ENCODE measurements at regions of chr20 and their contacts with region 1.

Region 1: GRCh38 chr20:10501402-10501801 is 66.3 kb downstream of the SLX4IP start:
- DNase-seq: peak in 6 of 14 experiments; percentile 5 to 34 (median 26)
- ATAC-seq: peak; percentile 52
- H3K4me3 ChIP-seq: peak overlapping the region; percentile 54
- H3K4me3 Mint-ChIP-seq: peak overlapping the region; percentile 89
- H3K27ac ChIP-seq: peak overlapping the region in 1 of 2 donors; percentile 71
- H3K27ac Mint-ChIP-seq: peak overlapping the region; percentile 93
- H3K4me1 ChIP-seq: peaks cover 19% of the 10 kb centered on the region
- H3K4me1 Mint-ChIP-seq: peaks cover 35% of the 10 kb centered on the region
- H3K27me3 ChIP-seq: no peaks in the 10 kb centered on the region
- H3K27me3 Mint-ChIP-seq: no peaks in the 10 kb centered on the region
- CTCF ChIP-seq: no peak

Region 2: DNA sequence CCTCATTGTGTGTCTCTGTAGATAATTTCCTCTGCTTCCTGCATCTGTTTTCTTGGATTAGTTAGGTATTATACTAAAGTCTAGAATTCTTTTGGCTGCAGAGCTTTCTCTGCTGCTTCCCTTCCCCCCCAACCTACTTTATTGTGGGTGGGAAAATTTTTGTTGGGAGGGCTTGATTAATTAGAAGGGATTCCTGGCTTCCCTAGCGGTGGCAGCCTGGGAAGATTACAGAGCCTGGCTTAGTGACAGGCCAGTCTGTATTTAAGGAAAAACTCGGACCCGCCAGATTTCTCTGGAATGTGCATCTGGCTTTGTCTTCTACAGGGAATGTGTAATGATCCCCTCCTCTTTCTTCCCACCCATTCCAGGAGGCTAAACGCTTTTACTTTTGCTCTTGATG is 35.1 kb before region 1 on chr20:
- CTCF ChIA-PET with region 1: no interaction called
- POLR2A ChIA-PET with region 1: no interaction called
- intact Hi-C with region 1: no loop called
- DNase-seq: no peak
- ATAC-seq: no peak
- H3K4me3 ChIP-seq: no peak overlapping the region
- H3K4me3 Mint-ChIP-seq: no peak overlapping the region
- H3K27ac ChIP-seq: no peak overlapping the region
- H3K27ac Mint-ChIP-seq: no peak overlapping the region
- H3K4me1 ChIP-seq: peaks cover 4% of the 10 kb centered on the region
- H3K4me1 Mint-ChIP-seq: peaks cover 7% of the 10 kb centered on the region
- H3K27me3 ChIP-seq: no peaks in the 10 kb centered on the region
- H3K27me3 Mint-ChIP-seq: no peaks in the 10 kb centered on the region
- CTCF ChIP-seq: no peak

Region 3: GRCh38 chr20:10536531-10536930 is 35.1 kb after region 1 on chr20:
- CTCF ChIA-PET with region 1: no interaction called
- POLR2A ChIA-PET with region 1: no interaction called
- intact Hi-C with region 1: loop called in 1 of 2 experiments (anchors 5 kb)
- DNase-seq: peak in 8 of 14 experiments; percentile 4 to 39 (median 20)
- ATAC-seq: no peak
- H3K4me3 ChIP-seq: no peak overlapping the region
- H3K4me3 Mint-ChIP-seq: no peak overlapping the region
- H3K27ac ChIP-seq: no peak overlapping the region
- H3K27ac Mint-ChIP-seq: no peak overlapping the region
- H3K4me1 ChIP-seq: no peaks in the 10 kb centered on the region
- H3K4me1 Mint-ChIP-seq: peaks cover 24% of the 10 kb centered on the region
- H3K27me3 ChIP-seq: no peaks in the 10 kb centered on the region
- H3K27me3 Mint-ChIP-seq: no peaks in the 10 kb centered on the region
- CTCF ChIP-seq: peak; percentile 24

Measured in CD4-positive, alpha-beta T cell (primary cell).